ENCODE measurements at regions of chr16 and their contacts with region 1.

Region 1: DNA sequence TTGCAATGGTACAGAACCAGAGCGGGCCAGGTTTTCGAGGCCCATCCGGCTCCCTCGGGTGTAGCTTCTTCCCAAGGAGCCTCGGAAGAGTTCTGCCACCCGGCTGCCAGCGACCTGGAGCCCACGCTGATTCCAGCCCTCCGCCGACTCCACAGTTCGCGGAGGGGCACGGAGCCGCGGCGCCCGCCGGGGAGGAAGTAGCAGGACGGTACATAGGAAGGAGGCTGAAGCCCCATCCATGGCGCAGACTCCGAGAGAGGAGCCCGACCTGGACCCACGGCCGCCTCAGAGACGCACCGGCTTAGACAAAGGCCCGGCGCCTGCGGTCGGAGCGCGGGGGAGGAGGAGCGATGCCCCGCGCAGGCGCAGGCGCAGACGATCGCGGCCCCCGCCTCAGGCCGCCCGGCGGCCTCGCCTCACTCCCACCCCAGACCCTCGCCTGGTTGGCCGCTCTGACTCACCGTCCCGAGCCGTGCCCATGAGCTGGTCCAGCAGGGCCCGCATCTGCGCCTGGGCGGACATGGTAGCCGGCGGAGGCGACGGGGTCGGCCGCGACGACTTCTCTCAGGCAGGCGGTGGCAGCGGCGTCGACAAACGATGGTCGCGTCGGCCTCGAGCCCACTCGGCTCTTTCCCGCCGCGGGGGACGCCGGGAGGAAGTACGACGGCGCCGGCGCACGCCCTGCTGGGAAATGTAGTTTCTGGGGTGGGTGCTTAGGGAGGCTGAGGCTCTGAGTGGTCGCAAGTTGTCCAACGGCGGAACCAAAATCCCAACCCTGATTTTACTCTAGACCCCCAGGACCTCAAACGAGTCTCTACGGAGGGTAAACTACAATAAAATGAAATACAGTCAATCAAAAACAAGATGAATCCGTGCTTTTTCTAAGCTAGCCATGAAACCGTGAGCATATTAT is at the start of gene LUC7L:
- DNase-seq: peak; percentile 95
- total RNA-seq, gene LUC7L: 30.9 TPM

Region 2: GRCh38 chr16:352547-353403 is 123.7 kb after region 1 on chr16 and contains the start of gene AXIN1:
- intact Hi-C with region 1: loop called (anchors 2 kb)
- DNase-seq: peak; percentile 99
- total RNA-seq, gene AXIN1: 13.5 TPM